Cardiac septum (tissue), 1 donor: ENCODE measurements at regions of chr1 and their contacts with region 1.

Region 1: GRCh38 chr1:112126598-112126997 is 137.1 kb upstream of the KCND3 start:
- DNase-seq: no peak

Region 2: GRCh38 chr1:111904478-111905218 is 221.9 kb before region 1 on chr1:
- intact Hi-C with region 1: no loop called
- DNase-seq: peak; percentile 76

Region 3: GRCh38 chr1:112144733-112145426 is 18.3 kb after region 1 on chr1:
- intact Hi-C with region 1: no loop called
- DNase-seq: no peak

Region 4: DNA sequence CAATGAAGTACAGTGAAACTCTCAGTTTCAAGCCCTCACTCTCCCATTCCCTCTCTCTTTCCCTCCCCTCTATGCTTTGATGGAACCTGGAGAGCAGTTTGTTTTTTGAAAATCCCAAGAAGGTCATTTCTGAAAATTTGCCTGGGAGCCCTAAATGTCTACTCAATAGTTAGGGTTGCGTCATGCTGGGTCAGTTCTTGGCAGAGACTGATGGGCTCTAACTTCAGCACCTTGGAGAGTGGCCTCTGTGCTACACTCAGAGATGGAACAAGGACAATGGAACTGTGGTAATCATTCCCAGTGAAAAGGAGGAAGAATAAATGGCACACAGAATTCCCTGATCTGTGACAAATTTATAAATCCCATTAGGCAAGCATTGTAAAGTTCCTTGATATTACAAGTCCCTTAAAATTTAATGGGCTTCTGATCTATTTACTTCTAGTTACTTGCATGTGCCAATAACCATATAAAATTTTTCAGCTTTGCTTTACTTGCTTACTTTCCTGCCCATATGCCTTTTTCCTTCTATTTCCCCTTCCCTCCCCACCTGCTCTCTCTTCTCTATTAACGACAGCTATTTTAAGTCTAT is 45.8 kb after region 1 on chr1:
- intact Hi-C with region 1: loop called (anchors 10 kb)
- DNase-seq: no peak